Transverse colon (tissue), 4 donors: ENCODE measurements at regions of chr2 and their contacts with region 1.

Region 1: GRCh38 chr2:67701011-67701410 is 303.9 kb downstream of the ETAA1 start:
- DNase-seq: no peak
- H3K4me3 ChIP-seq: no peak overlapping the region
- H3K27ac ChIP-seq: no peak overlapping the region
- H3K4me1 ChIP-seq: no peaks in the 10 kb centered on the region
- H3K27me3 ChIP-seq: no peaks in the 10 kb centered on the region
- CTCF ChIP-seq: no peak
- EP300 ChIP-seq: no peak
- POLR2A ChIP-seq: no peak

Region 2: DNA sequence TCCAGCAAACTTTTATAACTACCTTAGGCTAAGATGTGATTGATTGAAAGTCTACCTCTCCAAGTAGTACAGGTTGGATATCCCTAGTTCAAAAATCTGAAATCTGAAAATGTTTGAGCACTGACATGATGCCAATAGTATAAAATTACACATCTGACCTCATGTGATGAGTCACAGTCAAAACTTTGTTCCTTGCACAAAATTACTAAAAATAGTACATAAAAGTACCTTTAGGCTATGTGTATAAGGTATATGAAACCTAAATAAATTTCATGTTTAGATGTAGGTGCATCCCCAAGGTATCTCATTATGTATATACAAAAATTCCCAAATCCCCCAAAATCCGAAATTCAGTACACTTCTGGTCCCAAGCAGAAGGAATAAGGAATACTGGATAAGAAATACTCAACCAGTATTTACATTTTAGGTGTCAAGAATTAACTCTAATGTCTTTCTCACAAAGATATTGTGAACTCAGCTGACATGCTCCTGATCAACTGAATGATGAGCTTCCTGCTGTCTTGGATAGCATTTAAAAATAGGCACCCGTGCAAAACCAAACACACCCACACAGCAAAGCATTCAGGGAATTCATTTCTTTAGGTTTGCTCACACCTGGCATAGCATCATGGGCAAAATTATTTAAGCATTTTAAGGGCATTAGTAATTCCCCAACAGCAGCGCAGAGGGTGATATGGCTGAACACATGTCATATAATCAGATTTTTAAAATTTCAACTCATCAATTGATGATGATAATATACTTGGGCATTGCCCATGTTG is 1763.4 kb before region 1 on chr2:
- in situ Hi-C with region 1: no loop called
- intact Hi-C with region 1: loop called (anchors 10 kb)
- DNase-seq: no peak
- H3K4me3 ChIP-seq: no peak overlapping the region
- H3K27ac ChIP-seq: no peak overlapping the region
- H3K4me1 ChIP-seq: no peaks in the 10 kb centered on the region
- H3K27me3 ChIP-seq: no peaks in the 10 kb centered on the region
- CTCF ChIP-seq: no peak
- EP300 ChIP-seq: no peak
- POLR2A ChIP-seq: no peak

Region 3: DNA sequence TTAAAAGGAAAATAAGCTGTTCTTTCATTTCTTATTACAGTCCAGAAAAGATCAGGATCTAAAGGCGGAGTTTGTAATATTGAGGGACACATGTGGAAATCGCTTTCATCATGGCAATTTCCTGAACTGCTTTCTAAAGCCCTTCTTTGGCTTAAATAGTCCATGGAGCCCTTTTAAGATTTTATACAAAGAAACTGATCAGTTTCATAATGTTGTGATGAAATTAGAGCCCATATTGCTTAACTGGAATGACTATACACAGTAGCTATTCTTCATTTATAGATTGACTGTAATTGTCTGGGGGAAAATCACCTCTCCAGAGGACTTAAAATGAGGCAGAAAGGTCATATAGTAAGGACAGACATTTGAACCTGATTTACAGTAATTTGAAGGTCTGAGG is 18.3 kb after region 1 on chr2:
- in situ Hi-C with region 1: no loop called
- intact Hi-C with region 1: no loop called
- DNase-seq: no peak
- H3K4me3 ChIP-seq: no peak overlapping the region
- H3K27ac ChIP-seq: no peak overlapping the region
- H3K4me1 ChIP-seq: no peaks in the 10 kb centered on the region
- H3K27me3 ChIP-seq: no peaks in the 10 kb centered on the region
- CTCF ChIP-seq: no peak
- EP300 ChIP-seq: no peak
- POLR2A ChIP-seq: no peak